ENCODE measurements at regions of chr11 and their contacts with region 1.

Region 1: GRCh38 chr11:43404836-43405479 is 46.2 kb downstream of the TTC17 start:
- DNase-seq: no peak
- ATAC-seq: no peak
- H3K4me3 ChIP-seq: no peak overlapping the region
- H3K27ac ChIP-seq: no peak overlapping the region
- H3K4me1 ChIP-seq: no peaks in the 10 kb centered on the region
- H3K27me3 ChIP-seq: no peaks in the 10 kb centered on the region
- CTCF ChIP-seq: no peak
- POLR2A ChIP-seq: no peak
- RAD21 ChIP-seq: no peak

Region 2: DNA sequence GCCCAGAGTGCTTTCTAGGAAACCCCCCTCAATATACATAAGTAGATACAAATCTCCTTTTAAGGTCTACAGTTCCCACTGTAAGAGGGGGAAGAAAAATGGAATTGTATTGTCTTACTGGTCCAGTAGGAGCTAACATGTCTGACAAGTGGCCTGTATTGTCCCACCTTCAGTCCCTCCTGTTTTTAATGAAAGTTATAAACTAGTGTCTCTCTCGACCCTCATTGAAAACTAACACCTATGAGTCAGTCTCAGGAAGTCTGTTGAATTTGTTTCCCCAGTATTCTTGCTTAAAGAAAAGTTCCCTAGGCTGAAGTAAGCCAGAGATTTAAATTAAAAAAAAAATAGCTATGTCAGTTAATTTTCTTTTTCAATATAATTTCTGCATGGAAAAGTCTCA is 23.0 kb after region 1 on chr11:
- CTCF ChIA-PET with region 1: interaction called, 10 read pairs
- POLR2A ChIA-PET with region 1: no interaction called
- dilution Hi-C with region 1: no loop called
- in situ Hi-C with region 1: no loop called
- intact Hi-C with region 1: no loop called
- DNase-seq: peak; percentile 2
- ATAC-seq: no peak
- H3K4me3 ChIP-seq: no peak overlapping the region
- H3K27ac ChIP-seq: no peak overlapping the region
- H3K4me1 ChIP-seq: 0 out of 2 replicates have a peak, but pooled peaks cover 2% of the 10 kb centered on the region
- H3K27me3 ChIP-seq: no peaks in the 10 kb centered on the region
- CTCF ChIP-seq: no peak
- POLR2A ChIP-seq: no peak
- RAD21 ChIP-seq: no peak

Region 3: GRCh38 chr11:43447151-43447550 is 42.2 kb after region 1 on chr11:
- CTCF ChIA-PET with region 1: no interaction called
- POLR2A ChIA-PET with region 1: no interaction called
- dilution Hi-C with region 1: no loop called
- in situ Hi-C with region 1: no loop called
- intact Hi-C with region 1: loop called (anchors 5 kb)
- DNase-seq: no peak
- ATAC-seq: no peak
- H3K4me3 ChIP-seq: no peak overlapping the region
- H3K27ac ChIP-seq: no peak overlapping the region
- H3K4me1 ChIP-seq: no peaks in the 10 kb centered on the region
- H3K27me3 ChIP-seq: no peaks in the 10 kb centered on the region
- CTCF ChIP-seq: no peak
- POLR2A ChIP-seq: no peak
- RAD21 ChIP-seq: no peak

Region 4: GRCh38 chr11:44083906-44084305 is 678.9 kb after region 1 on chr11:
- CTCF ChIA-PET with region 1: no interaction called
- POLR2A ChIA-PET with region 1: no interaction called
- dilution Hi-C with region 1: no loop called
- in situ Hi-C with region 1: no loop called
- intact Hi-C with region 1: no loop called
- DNase-seq: no peak
- ATAC-seq: no peak
- H3K4me3 ChIP-seq: no peak overlapping the region
- H3K27ac ChIP-seq: no peak overlapping the region
- H3K4me1 ChIP-seq: no peaks in the 10 kb centered on the region
- H3K27me3 ChIP-seq: no peaks in the 10 kb centered on the region; the same call in 1 of the 2 replicates
- CTCF ChIP-seq: no peak
- POLR2A ChIP-seq: no peak
- RAD21 ChIP-seq: no peak